Activated CD4-positive, alpha-beta T cell treated with anti-CD3 and anti-CD28 coated beads, Interleukin-2, amount 10 ng/mL, durations not matched to agents 24 days and 14 days (primary cell): ENCODE measurements at regions of chr1 and their contacts with region 1.

Region 1: GRCh38 chr1:205775015-205775716 is at the start of gene RAB29:
- DNase-seq: peak; percentile 96
- H3K4me3 Mint-ChIP-seq: peak within 1 kb of the TSS; percentile 96
- H3K27ac Mint-ChIP-seq: peak within 1 kb of the TSS; percentile 95
- H3K4me1 Mint-ChIP-seq: peaks cover 51% of the 10 kb centered on the region
- H3K27me3 Mint-ChIP-seq: no peaks in the 10 kb centered on the region
- total RNA-seq, gene RAB29: 27.8 and 29.1 TPM in 2 replicates

Region 2: DNA sequence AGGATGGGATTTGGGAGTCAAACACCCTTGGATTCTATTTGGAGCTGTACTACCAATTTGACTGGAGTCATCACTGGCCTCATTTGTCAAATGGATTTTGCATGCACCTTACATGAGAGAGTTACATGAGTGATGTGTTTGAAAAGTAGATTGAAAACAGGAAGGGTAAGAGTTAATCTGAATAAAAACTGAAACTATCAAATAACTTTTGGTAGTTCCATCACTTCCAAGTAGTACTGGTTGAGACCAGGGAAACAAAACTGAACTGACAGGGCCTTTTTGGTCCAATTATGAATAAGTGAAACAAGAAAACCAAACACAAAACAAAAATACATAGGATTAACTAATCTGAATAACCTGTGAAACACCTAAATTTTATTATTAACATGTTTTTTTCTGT is 55.4 kb before region 1 on chr1:
- intact Hi-C with region 1: loop called (anchors 2 kb)
- DNase-seq: no peak
- H3K4me3 Mint-ChIP-seq: peak overlapping the region; percentile 49
- H3K27ac Mint-ChIP-seq: peak overlapping the region; percentile 88
- H3K4me1 Mint-ChIP-seq: peaks cover 27% of the 10 kb centered on the region
- H3K27me3 Mint-ChIP-seq: no peaks in the 10 kb centered on the region

Region 3: GRCh38 chr1:205729945-205730610 is 45.1 kb before region 1 on chr1:
- intact Hi-C with region 1: loop called (anchors 5 kb)
- DNase-seq: no peak
- H3K4me3 Mint-ChIP-seq: no peak overlapping the region
- H3K27ac Mint-ChIP-seq: peak overlapping the region; percentile 70
- H3K4me1 Mint-ChIP-seq: peaks cover 25% of the 10 kb centered on the region
- H3K27me3 Mint-ChIP-seq: no peaks in the 10 kb centered on the region

Region 4: DNA sequence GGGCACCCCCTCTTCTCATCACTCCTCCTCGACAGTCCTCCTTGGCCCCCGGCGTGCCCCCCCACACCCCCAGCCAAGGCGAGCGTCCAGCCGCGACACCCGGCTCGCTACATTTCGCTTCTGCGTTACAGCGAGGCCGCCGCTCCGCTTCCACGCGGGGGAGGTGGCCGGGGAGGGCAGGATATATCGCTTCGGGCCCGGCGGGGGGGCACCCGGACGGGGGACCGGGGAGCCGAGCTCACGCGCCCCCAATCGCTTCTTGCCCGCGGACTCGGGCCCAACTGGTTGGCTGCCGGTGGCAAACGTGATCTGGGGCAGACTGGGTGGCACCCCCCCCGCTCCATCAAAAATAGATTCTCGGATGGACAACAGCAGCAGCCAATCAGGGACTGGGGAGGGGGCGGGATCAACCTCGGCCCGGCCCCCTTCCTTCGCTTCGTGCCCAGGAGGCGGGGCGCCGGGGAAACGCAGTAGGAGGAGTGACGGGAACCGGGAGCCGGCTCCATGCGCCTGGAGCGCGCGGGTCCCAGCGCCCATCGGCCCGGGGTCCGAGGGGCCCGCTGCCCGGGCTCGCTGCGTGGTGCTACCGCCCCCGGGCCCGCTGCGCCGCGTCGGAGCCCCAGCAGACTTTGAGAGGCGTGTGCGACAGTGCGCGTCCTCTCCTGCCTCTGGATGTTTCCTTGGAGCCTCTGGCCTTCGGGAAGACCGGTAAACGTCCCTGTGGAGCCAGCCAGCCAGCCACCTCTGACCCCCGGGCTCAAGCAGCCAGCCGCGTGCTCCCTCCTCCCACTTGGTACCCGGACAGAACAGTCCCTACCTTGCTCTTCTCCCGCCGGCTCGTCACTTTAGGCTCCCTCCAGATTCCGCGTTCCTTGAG is 38.0 kb after region 1 on chr1 and contains the start of gene SLC41A1:
- intact Hi-C with region 1: loop called (anchors 2 kb)
- DNase-seq: peak; percentile 95
- H3K4me3 Mint-ChIP-seq: peak within 1 kb of the TSS; percentile 95
- H3K27ac Mint-ChIP-seq: peak within 1 kb of the TSS; percentile 86
- H3K4me1 Mint-ChIP-seq: peaks cover 37% of the 10 kb centered on the region
- H3K27me3 Mint-ChIP-seq: peaks cover 9% of the 10 kb centered on the region
- total RNA-seq, gene SLC41A1: 29.5 and 30.1 TPM in 2 replicates